ENCODE measurements at regions of chr13 and their contacts with region 1.

Region 1: GRCh38 chr13:33828431-33829129 is 10.6 kb downstream of the RFC3 start:
- DNase-seq: no peak
- H3K4me3 Mint-ChIP-seq: no peak overlapping the region
- H3K27ac Mint-ChIP-seq: peak overlapping the region; percentile 55
- H3K4me1 Mint-ChIP-seq: peaks cover 19% of the 10 kb centered on the region
- H3K27me3 Mint-ChIP-seq: no peaks in the 10 kb centered on the region

Region 2: GRCh38 chr13:33817901-33818706 is 10.5 kb before region 1 on chr13 and contains the start of gene RFC3:
- intact Hi-C with region 1: no loop called
- DNase-seq: peak; percentile 90
- H3K4me3 Mint-ChIP-seq: peak within 1 kb of the TSS; percentile 99
- H3K27ac Mint-ChIP-seq: peak within 1 kb of the TSS; percentile 96
- H3K4me1 Mint-ChIP-seq: peaks cover 37% of the 10 kb centered on the region
- H3K27me3 Mint-ChIP-seq: peaks cover 3% of the 10 kb centered on the region
- total RNA-seq, gene RFC3: 55.2 and 55.4 TPM in 2 replicates

Region 3: GRCh38 chr13:35164324-35164932 is 1335.8 kb after region 1 on chr13:
- intact Hi-C with region 1: loop called (anchors 10 kb)
- DNase-seq: no peak
- H3K4me3 Mint-ChIP-seq: no peak overlapping the region
- H3K27ac Mint-ChIP-seq: no peak overlapping the region
- H3K4me1 Mint-ChIP-seq: peaks cover 8% of the 10 kb centered on the region
- H3K27me3 Mint-ChIP-seq: no peaks in the 10 kb centered on the region